ENCODE measurements at regions of chr2 and their contacts with region 1.

Region 1: DNA sequence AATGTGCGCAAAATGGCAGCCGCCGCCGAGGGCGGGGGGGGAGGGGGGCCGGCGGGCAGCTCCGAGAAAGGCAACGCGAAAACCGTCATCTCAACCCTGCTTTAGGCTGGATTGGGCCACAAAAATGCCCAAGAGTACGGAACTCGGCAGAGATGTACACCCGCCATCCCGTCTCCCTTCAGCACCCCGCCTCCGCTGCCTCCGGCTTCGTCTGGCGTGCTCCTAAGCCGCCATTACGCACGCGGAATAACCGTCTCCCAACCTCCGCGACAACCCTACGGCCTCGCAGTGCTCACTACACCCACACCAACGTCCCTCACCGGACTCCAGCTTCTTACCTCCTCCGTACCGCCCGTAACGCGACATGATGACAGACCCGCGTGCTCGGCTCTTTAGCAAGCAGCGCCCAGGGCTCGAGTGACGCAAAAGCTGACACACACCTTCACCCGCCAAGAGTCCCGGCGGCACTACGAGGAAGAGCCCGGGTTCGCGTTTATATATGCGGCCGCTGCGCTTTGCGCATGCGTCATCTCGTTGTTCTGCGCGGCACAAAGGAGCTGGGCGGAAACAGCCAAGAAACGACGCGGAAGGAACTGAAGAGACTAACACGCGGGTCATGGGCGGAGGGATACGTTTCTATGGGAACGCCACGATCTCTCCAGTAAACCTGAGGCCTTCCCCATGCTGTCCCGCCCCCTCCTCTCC is at the start of gene SRSF7:
- DNase-seq: peak; percentile 97
- H3K4me3 Mint-ChIP-seq: peak within 1 kb of the TSS; percentile 100
- H3K27ac Mint-ChIP-seq: peak within 1 kb of the TSS; percentile 100
- H3K4me1 Mint-ChIP-seq: peaks cover 52% of the 10 kb centered on the region
- H3K27me3 Mint-ChIP-seq: peaks cover 3% of the 10 kb centered on the region
- total RNA-seq, gene SRSF7: 212 to 217 TPM

Region 2: DNA sequence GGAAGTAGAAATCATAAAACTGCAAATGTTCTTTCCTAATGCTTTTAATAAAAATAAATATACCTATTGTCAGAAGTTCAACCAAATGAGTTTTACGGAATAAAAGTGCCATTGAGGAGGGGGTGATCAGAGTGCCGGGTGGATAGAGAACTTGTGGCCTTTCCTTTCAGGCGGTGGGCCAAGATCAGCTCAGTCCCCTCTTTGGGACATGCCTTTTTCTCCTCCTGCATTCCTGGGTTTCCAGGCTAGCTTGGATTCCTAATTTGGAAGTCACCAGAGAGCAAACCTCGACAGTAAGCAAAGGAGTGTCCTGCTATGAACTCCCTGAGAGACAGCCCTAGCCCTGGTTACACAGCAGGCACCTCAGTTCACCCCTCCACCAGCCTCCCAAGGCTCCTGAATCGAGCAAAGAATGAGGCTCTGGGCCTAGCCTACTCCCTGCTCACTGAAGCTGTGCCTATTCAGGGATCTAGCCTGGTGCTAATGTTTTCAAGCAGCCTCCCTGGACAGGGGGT is 892.8 kb before region 1 on chr2:
- CTCF ChIA-PET with region 1: no interaction called
- intact Hi-C with region 1: no loop called
- DNase-seq: no peak
- H3K4me3 Mint-ChIP-seq: no peak overlapping the region
- H3K27ac Mint-ChIP-seq: no peak overlapping the region
- H3K4me1 Mint-ChIP-seq: no peaks in the 10 kb centered on the region
- H3K27me3 Mint-ChIP-seq: peaks cover 13% of the 10 kb centered on the region

Region 3: DNA sequence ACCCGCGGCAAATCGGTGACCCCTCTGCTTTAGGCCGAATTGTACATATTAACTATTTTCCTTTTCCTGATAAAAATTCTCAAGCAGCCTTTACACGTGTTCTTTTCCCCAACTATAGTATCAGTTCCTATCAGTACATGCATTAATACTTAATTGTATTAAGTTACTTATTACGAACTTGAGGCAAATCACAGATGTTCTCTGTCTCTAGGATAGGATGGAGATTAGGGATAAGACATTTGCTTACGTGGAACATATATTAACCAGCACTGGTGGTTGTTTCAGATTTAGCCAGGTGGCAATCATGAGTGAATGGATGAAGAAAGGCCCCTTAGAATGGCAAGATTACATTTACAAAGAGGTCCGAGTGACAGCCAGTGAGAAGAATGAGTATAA is 27.6 kb after region 1 on chr2:
- CTCF ChIA-PET with region 1: no interaction called
- intact Hi-C with region 1: loop called (anchors 1 kb)
- DNase-seq: no peak
- H3K4me3 Mint-ChIP-seq: peak overlapping the region; percentile 95
- H3K27ac Mint-ChIP-seq: peak overlapping the region; percentile 89
- H3K4me1 Mint-ChIP-seq: peaks cover 11% of the 10 kb centered on the region
- H3K27me3 Mint-ChIP-seq: peaks cover 10% of the 10 kb centered on the region

Region 4: DNA sequence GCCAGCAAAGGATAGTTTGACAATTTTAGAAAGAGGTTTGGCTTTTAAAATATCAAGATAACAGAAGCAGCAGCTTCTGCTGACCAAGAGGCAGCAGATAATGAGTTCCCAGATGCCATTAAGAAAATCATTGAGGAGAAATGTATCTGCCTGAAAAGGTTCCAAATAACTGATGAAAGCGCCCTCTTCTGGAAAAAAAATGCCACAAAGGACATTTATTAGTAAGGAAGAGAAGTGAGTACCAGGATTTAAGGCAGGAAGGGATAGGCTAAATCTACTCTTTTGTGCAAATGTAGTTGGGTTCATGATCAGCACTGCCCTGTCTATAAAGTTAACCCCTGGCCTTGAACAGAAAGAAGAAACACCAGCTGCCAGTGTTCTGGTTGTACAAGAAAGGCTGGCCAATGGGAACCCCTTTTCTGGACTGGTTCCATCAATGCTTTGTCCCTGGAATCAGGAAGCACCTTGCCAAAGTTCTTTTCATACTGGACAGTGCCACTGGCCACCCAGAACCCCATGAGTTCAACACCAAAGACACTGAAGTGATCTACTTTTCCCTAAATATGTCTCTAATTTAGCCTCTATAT is 84.1 kb after region 1 on chr2:
- CTCF ChIA-PET with region 1: no interaction called
- intact Hi-C with region 1: loop called (anchors 2 kb)
- DNase-seq: no peak
- H3K4me3 Mint-ChIP-seq: no peak overlapping the region
- H3K27ac Mint-ChIP-seq: no peak overlapping the region
- H3K4me1 Mint-ChIP-seq: no peaks in the 10 kb centered on the region
- H3K27me3 Mint-ChIP-seq: no peaks in the 10 kb centered on the region

Region 5: GRCh38 chr2:38875576-38876367 is 124.7 kb after region 1 on chr2 and contains the starts of genes DHX57 and MORN2:
- CTCF ChIA-PET with region 1: no interaction called
- intact Hi-C with region 1: loop called (anchors 1 kb)
- DNase-seq: peak; percentile 88
- H3K4me3 Mint-ChIP-seq: peak within 1 kb of the TSS; percentile 85
- H3K27ac Mint-ChIP-seq: peak within 1 kb of the TSS; percentile 77
- H3K4me1 Mint-ChIP-seq: peaks cover 24% of the 10 kb centered on the region
- H3K27me3 Mint-ChIP-seq: no peaks in the 10 kb centered on the region
- total RNA-seq, gene DHX57: 10.8 to 12.5 TPM
- total RNA-seq, gene MORN2: 5.1 to 6.2 TPM

Region 6: DNA sequence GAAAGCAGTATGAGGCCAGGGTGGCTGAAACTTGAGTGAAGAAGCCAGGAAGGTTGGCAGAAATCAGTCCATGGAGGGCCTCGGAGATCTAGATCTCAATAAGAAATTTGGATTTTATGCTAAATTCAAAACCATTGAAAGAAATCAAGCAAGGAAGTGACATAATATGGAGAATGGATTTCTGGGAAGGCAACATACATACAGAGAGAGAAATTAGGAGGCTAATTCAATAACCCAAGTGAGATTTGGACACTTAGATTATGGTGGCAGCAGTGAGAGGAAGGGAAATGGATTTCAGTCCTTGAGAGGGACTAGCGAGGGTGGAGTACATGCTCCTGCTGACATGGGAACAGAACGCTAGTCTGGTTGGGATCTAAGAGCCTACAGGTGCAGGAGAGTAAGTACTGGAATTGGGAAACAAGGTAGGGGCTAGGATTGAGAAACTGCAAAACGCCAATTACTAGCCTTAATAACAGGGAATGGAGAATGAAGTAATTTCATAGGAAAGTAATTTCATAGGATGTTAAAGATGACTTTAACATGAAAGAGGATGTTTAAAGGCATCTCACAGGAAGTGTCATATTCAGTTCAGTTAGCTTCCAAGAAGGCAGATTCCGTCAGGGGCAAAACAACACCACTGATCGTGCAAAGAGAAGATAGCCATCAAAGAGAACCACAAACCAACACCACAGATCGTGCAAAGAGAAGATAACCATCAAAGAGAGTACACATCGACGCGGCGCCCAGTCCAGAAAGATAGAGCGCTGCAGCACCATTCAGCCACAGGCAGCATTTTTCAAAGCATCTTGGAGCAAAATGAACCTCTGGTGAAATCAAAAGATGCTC is 465.5 kb after region 1 on chr2:
- CTCF ChIA-PET with region 1: no interaction called
- intact Hi-C with region 1: loop called (anchors 5 kb)
- DNase-seq: peak; percentile 64
- H3K4me3 Mint-ChIP-seq: peak overlapping the region; percentile 57
- H3K27ac Mint-ChIP-seq: peak overlapping the region; percentile 87
- H3K4me1 Mint-ChIP-seq: peaks cover 36% of the 10 kb centered on the region
- H3K27me3 Mint-ChIP-seq: no peaks in the 10 kb centered on the region